PC-9 (cell line): ENCODE measurements at regions of chr10 and their contacts with region 1.

Region 1: DNA sequence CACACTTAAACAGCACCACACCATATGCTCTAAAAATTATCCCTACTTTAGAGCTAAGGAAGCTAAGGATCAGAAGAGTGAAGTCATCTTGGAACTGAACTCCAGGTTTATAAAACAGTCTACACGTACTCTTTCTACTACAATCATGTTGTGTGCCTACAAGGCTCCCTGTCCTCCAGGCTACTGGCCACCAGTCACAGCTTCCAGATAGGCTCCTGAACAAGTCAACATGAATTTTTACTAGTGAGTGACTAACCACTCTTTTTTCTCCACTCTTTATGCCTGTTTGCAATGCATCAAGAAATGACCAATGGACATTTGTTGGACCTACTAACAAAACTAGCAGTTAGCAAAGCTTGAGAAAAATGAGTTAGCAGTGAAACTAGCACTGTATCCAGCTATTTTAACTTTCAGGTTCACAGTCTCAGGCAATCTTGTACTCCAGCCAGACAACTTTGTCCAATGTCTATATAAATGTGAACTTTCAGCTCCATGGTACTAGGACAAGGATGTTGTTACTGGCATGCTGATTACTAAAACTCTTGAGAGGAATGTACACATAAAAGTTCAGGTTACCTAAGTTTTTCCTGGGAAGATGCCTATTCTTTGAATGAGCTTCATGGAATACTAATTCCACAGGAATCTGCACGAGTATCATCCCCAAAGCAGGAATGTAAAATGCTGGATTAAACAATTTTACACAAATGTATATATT is 180.0 kb downstream of the BTAF1 start:
- DNase-seq: no peak
- H3K4me3 ChIP-seq: no peak overlapping the region
- H3K27ac ChIP-seq: no peak overlapping the region
- H3K4me1 ChIP-seq: peaks cover 19% of the 10 kb centered on the region
- H3K27me3 ChIP-seq: no peaks in the 10 kb centered on the region
- CTCF ChIP-seq: no peak

Region 2: GRCh38 chr10:91969297-91969696 is 134.2 kb before region 1 on chr10:
- CTCF ChIA-PET with region 1: no interaction called
- POLR2A ChIA-PET with region 1: no interaction called
- intact Hi-C with region 1: no loop called
- DNase-seq: no peak
- H3K4me3 ChIP-seq: no peak overlapping the region
- H3K27ac ChIP-seq: no peak overlapping the region
- H3K4me1 ChIP-seq: no peaks in the 10 kb centered on the region
- H3K27me3 ChIP-seq: no peaks in the 10 kb centered on the region
- CTCF ChIP-seq: no peak

Region 3: GRCh38 chr10:92082583-92083280 is 20.8 kb before region 1 on chr10:
- CTCF ChIA-PET with region 1: no interaction called
- POLR2A ChIA-PET with region 1: no interaction called
- intact Hi-C with region 1: no loop called
- DNase-seq: peak in 1 of 2 experiments; percentile 38
- H3K4me3 ChIP-seq: no peak overlapping the region
- H3K27ac ChIP-seq: no peak overlapping the region
- H3K4me1 ChIP-seq: no peaks in the 10 kb centered on the region
- H3K27me3 ChIP-seq: no peaks in the 10 kb centered on the region
- CTCF ChIP-seq: no peak

Region 4: DNA sequence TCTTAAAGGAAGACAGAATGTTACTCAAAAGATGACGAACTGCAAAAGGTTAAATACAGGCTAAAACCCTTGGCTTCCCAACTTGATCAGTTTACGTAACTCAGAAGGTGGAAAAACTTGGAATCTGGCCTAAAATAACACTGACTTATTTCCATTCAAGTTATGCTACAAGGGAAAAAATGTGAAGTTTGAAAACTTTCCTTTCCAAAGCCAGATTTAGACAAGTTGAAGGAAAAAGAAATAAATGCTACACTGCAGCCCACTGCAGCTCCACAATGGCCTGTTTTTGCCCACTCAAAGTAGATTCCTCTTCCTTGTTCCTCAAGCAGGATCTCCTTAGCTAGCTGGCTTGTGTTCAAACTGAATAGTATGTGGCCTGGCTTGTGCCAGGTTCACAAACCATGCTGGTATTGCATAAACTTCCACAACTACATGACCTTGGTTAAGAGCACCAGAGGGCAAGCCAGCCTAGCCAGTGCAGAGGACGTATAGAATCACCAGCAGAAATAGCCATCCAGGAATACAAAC is 21.1 kb after region 1 on chr10:
- CTCF ChIA-PET with region 1: no interaction called
- POLR2A ChIA-PET with region 1: no interaction called
- intact Hi-C with region 1: no loop called
- DNase-seq: peak; percentile 17 to 62
- H3K4me3 ChIP-seq: no peak overlapping the region; the same call in 1 of the 2 replicates
- H3K27ac ChIP-seq: peak overlapping the region; percentile 78
- H3K4me1 ChIP-seq: peaks cover 54% of the 10 kb centered on the region
- H3K27me3 ChIP-seq: no peaks in the 10 kb centered on the region
- CTCF ChIP-seq: no peak

Region 5: DNA sequence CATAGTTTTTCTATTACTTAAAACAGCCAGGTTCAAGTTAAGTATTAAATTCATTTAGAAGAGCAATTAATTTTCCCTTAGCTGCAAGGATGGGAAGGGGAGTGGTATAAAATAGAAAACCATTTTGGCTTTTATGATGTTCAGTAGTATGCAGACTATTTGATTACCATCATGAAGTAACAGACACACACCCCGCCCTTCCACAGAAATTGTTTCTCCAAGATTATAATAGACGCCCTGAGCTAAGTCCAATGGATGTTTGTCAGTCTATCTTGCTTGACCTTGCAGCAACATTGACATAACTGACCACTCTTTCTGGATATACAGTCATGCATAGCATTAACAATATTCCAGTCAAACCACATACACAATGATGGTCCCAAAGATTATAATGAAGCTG is 145.0 kb after region 1 on chr10:
- CTCF ChIA-PET with region 1: no interaction called
- POLR2A ChIA-PET with region 1: interaction called, 14 read pairs
- intact Hi-C with region 1: no loop called
- DNase-seq: no peak
- H3K4me3 ChIP-seq: no peak overlapping the region
- H3K27ac ChIP-seq: no peak overlapping the region
- H3K4me1 ChIP-seq: peaks cover 17% of the 10 kb centered on the region
- H3K27me3 ChIP-seq: no peaks in the 10 kb centered on the region
- CTCF ChIP-seq: no peak

Region 6: DNA sequence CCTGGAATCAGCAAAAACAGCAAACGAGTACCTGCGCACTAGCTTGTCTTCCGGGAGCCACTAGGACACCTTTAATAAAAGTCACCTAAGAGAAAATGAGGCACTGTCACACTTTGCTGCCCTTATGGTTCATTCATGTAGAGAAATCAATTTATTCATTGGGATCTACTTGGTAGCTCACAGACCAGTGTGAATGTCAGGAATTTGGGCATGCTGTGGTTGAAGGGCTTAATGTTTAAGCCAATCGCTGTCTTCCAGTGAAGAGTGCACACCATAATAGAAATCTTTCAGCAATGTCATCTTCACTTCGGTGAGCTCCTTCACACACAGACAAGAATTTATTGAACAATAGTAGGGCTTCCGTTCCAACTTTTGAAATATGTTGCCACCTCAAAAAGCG is 252.5 kb after region 1 on chr10:
- CTCF ChIA-PET with region 1: interaction called, 10 read pairs
- POLR2A ChIA-PET with region 1: no interaction called
- intact Hi-C with region 1: no loop called
- DNase-seq: no peak
- H3K4me3 ChIP-seq: no peak overlapping the region
- H3K27ac ChIP-seq: no peak overlapping the region
- H3K4me1 ChIP-seq: no peaks in the 10 kb centered on the region
- H3K27me3 ChIP-seq: no peaks in the 10 kb centered on the region
- CTCF ChIP-seq: no peak